B cell (primary cell): ENCODE measurements at regions of chr2 and their contacts with region 1.

Region 1: GRCh38 chr2:202178342-202178958 is 59.9 kb downstream of the SUMO1 start:
- DNase-seq: peak; percentile 69
- ATAC-seq: peak; percentile 47
- H3K4me3 ChIP-seq: no peak overlapping the region
- H3K4me3 Mint-ChIP-seq: no peak overlapping the region
- H3K27ac ChIP-seq: no peak overlapping the region
- H3K27ac Mint-ChIP-seq: no peak overlapping the region
- H3K4me1 ChIP-seq: no peaks in the 10 kb centered on the region
- H3K4me1 Mint-ChIP-seq: no peaks in the 10 kb centered on the region
- H3K27me3 ChIP-seq: no peaks in the 10 kb centered on the region
- H3K27me3 Mint-ChIP-seq: peaks cover 14% of the 10 kb centered on the region
- CTCF ChIP-seq: peak; percentile 93

Region 2: DNA sequence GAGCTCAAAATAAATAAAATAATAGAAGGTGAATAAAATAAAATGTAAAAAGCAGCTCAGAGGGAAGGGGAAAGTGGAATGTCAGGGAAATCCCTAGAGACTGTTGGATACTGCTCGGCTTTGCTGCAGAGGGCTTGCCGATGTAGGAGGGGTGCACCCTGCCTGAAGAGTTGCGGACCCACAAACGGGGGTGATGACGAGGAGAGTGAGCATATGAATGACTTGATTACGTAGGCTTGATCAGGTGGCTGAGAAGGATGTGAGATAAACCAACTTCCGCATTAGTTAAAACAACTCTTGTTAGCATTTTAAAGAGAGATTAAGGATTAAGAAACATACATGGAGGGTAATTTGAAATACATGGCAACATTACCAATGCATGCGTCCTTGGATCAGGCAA is 514.1 kb before region 1 on chr2:
- CTCF ChIA-PET with region 1: interaction called, 4 read pairs
- POLR2A ChIA-PET with region 1: no interaction called
- intact Hi-C with region 1: loop called (anchors 2 kb)
- DNase-seq: no peak
- ATAC-seq: no peak
- H3K4me3 ChIP-seq: no peak overlapping the region
- H3K4me3 Mint-ChIP-seq: no peak overlapping the region
- H3K27ac ChIP-seq: no peak overlapping the region
- H3K27ac Mint-ChIP-seq: no peak overlapping the region
- H3K4me1 ChIP-seq: no peaks in the 10 kb centered on the region
- H3K4me1 Mint-ChIP-seq: no peaks in the 10 kb centered on the region
- H3K27me3 ChIP-seq: no peaks in the 10 kb centered on the region
- H3K27me3 Mint-ChIP-seq: peaks cover 15% of the 10 kb centered on the region
- CTCF ChIP-seq: no peak

Region 3: GRCh38 chr2:201680743-201681142 is 497.7 kb before region 1 on chr2:
- CTCF ChIA-PET with region 1: no interaction called
- POLR2A ChIA-PET with region 1: no interaction called
- intact Hi-C with region 1: no loop called
- DNase-seq: no peak
- ATAC-seq: no peak
- H3K4me3 ChIP-seq: no peak overlapping the region
- H3K4me3 Mint-ChIP-seq: no peak overlapping the region
- H3K27ac ChIP-seq: no peak overlapping the region
- H3K27ac Mint-ChIP-seq: no peak overlapping the region
- H3K4me1 ChIP-seq: no peaks in the 10 kb centered on the region
- H3K4me1 Mint-ChIP-seq: no peaks in the 10 kb centered on the region
- H3K27me3 ChIP-seq: peaks cover 0 to 11% (median 2%) of the 10 kb centered on the region in 4 experiments
- H3K27me3 Mint-ChIP-seq: peaks cover 23% of the 10 kb centered on the region
- CTCF ChIP-seq: peak; percentile 19

Region 4: GRCh38 chr2:201754717-201755415 is 423.6 kb before region 1 on chr2:
- CTCF ChIA-PET with region 1: interaction called, 7 read pairs
- POLR2A ChIA-PET with region 1: no interaction called
- intact Hi-C with region 1: loop called (anchors 1 kb)
- DNase-seq: no peak
- ATAC-seq: no peak
- H3K4me3 ChIP-seq: no peak overlapping the region
- H3K4me3 Mint-ChIP-seq: no peak overlapping the region
- H3K27ac ChIP-seq: no peak overlapping the region
- H3K27ac Mint-ChIP-seq: no peak overlapping the region
- H3K4me1 ChIP-seq: no peaks in the 10 kb centered on the region
- H3K4me1 Mint-ChIP-seq: no peaks in the 10 kb centered on the region
- H3K27me3 ChIP-seq: no peaks in the 10 kb centered on the region
- H3K27me3 Mint-ChIP-seq: no peaks in the 10 kb centered on the region
- CTCF ChIP-seq: no peak

Region 5: GRCh38 chr2:201854221-201854801 is 324.1 kb before region 1 on chr2:
- CTCF ChIA-PET with region 1: interaction called, 198 read pairs
- POLR2A ChIA-PET with region 1: no interaction called
- intact Hi-C with region 1: no loop called
- DNase-seq: no peak
- ATAC-seq: no peak
- H3K4me3 ChIP-seq: no peak overlapping the region
- H3K4me3 Mint-ChIP-seq: no peak overlapping the region
- H3K27ac ChIP-seq: no peak overlapping the region
- H3K27ac Mint-ChIP-seq: no peak overlapping the region
- H3K4me1 ChIP-seq: no peaks in the 10 kb centered on the region
- H3K4me1 Mint-ChIP-seq: peaks cover 4% of the 10 kb centered on the region
- H3K27me3 ChIP-seq: peaks cover 0 to 23% (median 15%) of the 10 kb centered on the region in 4 experiments
- H3K27me3 Mint-ChIP-seq: peaks cover 37% of the 10 kb centered on the region
- CTCF ChIP-seq: no peak

Region 6: GRCh38 chr2:201964631-201965206 is 213.7 kb before region 1 on chr2:
- CTCF ChIA-PET with region 1: interaction called, 10 read pairs
- POLR2A ChIA-PET with region 1: no interaction called
- intact Hi-C with region 1: loop called (anchors 2 kb)
- DNase-seq: no peak
- ATAC-seq: no peak
- H3K4me3 ChIP-seq: no peak overlapping the region
- H3K4me3 Mint-ChIP-seq: no peak overlapping the region
- H3K27ac ChIP-seq: no peak overlapping the region
- H3K27ac Mint-ChIP-seq: no peak overlapping the region
- H3K4me1 ChIP-seq: peaks cover 0 to 20% of the 10 kb centered on the region in 2 donors
- H3K4me1 Mint-ChIP-seq: peaks cover 14% of the 10 kb centered on the region
- H3K27me3 ChIP-seq: no peaks in the 10 kb centered on the region
- H3K27me3 Mint-ChIP-seq: no peaks in the 10 kb centered on the region
- CTCF ChIP-seq: no peak

Region 7: GRCh38 chr2:202135091-202135874 is 43.2 kb before region 1 on chr2:
- CTCF ChIA-PET with region 1: no interaction called
- POLR2A ChIA-PET with region 1: no interaction called
- intact Hi-C with region 1: no loop called
- DNase-seq: no peak
- ATAC-seq: no peak
- H3K4me3 ChIP-seq: no peak overlapping the region
- H3K4me3 Mint-ChIP-seq: no peak overlapping the region
- H3K27ac ChIP-seq: no peak overlapping the region
- H3K27ac Mint-ChIP-seq: no peak overlapping the region
- H3K4me1 ChIP-seq: no peaks in the 10 kb centered on the region
- H3K4me1 Mint-ChIP-seq: no peaks in the 10 kb centered on the region
- H3K27me3 ChIP-seq: no peaks in the 10 kb centered on the region
- H3K27me3 Mint-ChIP-seq: no peaks in the 10 kb centered on the region
- CTCF ChIP-seq: no peak

Region 8: GRCh38 chr2:202204855-202205254 is 26.4 kb after region 1 on chr2:
- CTCF ChIA-PET with region 1: no interaction called
- POLR2A ChIA-PET with region 1: no interaction called
- intact Hi-C with region 1: no loop called
- DNase-seq: no peak
- ATAC-seq: no peak
- H3K4me3 ChIP-seq: no peak overlapping the region
- H3K4me3 Mint-ChIP-seq: no peak overlapping the region
- H3K27ac ChIP-seq: no peak overlapping the region
- H3K27ac Mint-ChIP-seq: no peak overlapping the region
- H3K4me1 ChIP-seq: peaks cover 5 to 6% of the 10 kb centered on the region in 2 donors
- H3K4me1 Mint-ChIP-seq: peaks cover 5% of the 10 kb centered on the region
- H3K27me3 ChIP-seq: no peaks in the 10 kb centered on the region
- H3K27me3 Mint-ChIP-seq: peaks cover 3% of the 10 kb centered on the region
- CTCF ChIP-seq: no peak